Activated CD8-positive, alpha-beta T cell treated with anti-CD3 and anti-CD28 coated beads for 36 hours (primary cell): ENCODE measurements at regions of chr12 and their contacts with region 1.

Region 1: GRCh38 chr12:123232807-123233543 is at the starts of genes MPHOSPH9 and MTRFR:
- DNase-seq: peak; percentile 99
- ATAC-seq: peak; percentile 93
- H3K4me3 Mint-ChIP-seq: peak within 1 kb of the TSS; percentile 96
- H3K27ac Mint-ChIP-seq: peak within 1 kb of the TSS; percentile 99
- H3K4me1 Mint-ChIP-seq: peaks cover 48% of the 10 kb centered on the region
- H3K27me3 Mint-ChIP-seq: no peaks in the 10 kb centered on the region
- CTCF ChIP-seq: no peak
- total RNA-seq, gene MPHOSPH9: 96.9 to 101 TPM
- total RNA-seq, gene MTRFR: 28.1 to 31.0 TPM

Region 2: DNA sequence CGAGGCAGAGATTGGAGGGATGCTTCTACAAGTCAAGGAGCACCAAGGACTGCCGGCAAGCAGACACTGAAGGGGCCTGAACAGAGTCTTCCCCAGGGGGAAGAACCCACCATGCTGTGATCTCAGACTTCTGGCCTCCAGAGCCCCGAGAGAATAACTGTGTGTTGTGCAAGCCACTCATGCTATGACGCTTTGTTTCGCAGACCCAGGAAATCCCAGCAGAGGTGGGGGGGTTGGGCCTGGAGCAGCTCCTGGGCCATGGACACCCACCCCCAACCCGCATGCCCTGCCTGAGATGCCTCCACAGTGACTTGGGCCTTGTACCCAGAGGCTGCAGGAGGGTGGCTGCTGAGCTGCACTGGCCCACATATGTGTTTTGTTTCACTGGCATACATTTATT is 221.3 kb before region 1 on chr12:
- CTCF ChIA-PET with region 1: no interaction called
- POLR2A ChIA-PET with region 1: no interaction called
- intact Hi-C with region 1: no loop called
- DNase-seq: no peak
- ATAC-seq: no peak
- H3K4me3 Mint-ChIP-seq: no peak overlapping the region
- H3K27ac Mint-ChIP-seq: no peak overlapping the region
- H3K4me1 Mint-ChIP-seq: no peaks in the 10 kb centered on the region
- H3K27me3 Mint-ChIP-seq: no peaks in the 10 kb centered on the region
- CTCF ChIP-seq: no peak

Region 3: GRCh38 chr12:123043536-123044001 is 189.4 kb before region 1 on chr12:
- CTCF ChIA-PET with region 1: interaction called, 43 read pairs
- POLR2A ChIA-PET with region 1: interaction called, 11 read pairs
- intact Hi-C with region 1: loop called (anchors 10 kb)
- DNase-seq: peak; percentile 91
- ATAC-seq: peak; percentile 98
- H3K4me3 Mint-ChIP-seq: no peak overlapping the region
- H3K27ac Mint-ChIP-seq: peak overlapping the region; percentile 79
- H3K4me1 Mint-ChIP-seq: peaks cover 29% of the 10 kb centered on the region
- H3K27me3 Mint-ChIP-seq: no peaks in the 10 kb centered on the region
- CTCF ChIP-seq: peak; percentile 68

Region 4: GRCh38 chr12:123150744-123151456 is 82.1 kb before region 1 on chr12 and contains the start of gene PITPNM2:
- CTCF ChIA-PET with region 1: interaction called, 18 read pairs
- POLR2A ChIA-PET with region 1: interaction called, 11 read pairs
- intact Hi-C with region 1: no loop called
- DNase-seq: peak; percentile 64
- ATAC-seq: peak; percentile 82
- H3K4me3 Mint-ChIP-seq: peak within 1 kb of the TSS; percentile 76
- H3K27ac Mint-ChIP-seq: peak within 1 kb of the TSS; percentile 87
- H3K4me1 Mint-ChIP-seq: peaks cover 30% of the 10 kb centered on the region
- H3K27me3 Mint-ChIP-seq: no peaks in the 10 kb centered on the region
- CTCF ChIP-seq: no peak
- total RNA-seq, gene PITPNM2: 15.3 to 17.9 TPM

Region 5: GRCh38 chr12:123271001-123271729 is 38.2 kb after region 1 on chr12:
- CTCF ChIA-PET with region 1: interaction called, 12 read pairs
- POLR2A ChIA-PET with region 1: interaction called, 9 read pairs
- intact Hi-C with region 1: no loop called
- DNase-seq: peak; percentile 82
- ATAC-seq: peak; percentile 81
- H3K4me3 Mint-ChIP-seq: no peak overlapping the region
- H3K27ac Mint-ChIP-seq: no peak overlapping the region
- H3K4me1 Mint-ChIP-seq: peaks cover 19% of the 10 kb centered on the region
- H3K27me3 Mint-ChIP-seq: no peaks in the 10 kb centered on the region
- CTCF ChIP-seq: peak; percentile 25